Posterior vena cava (tissue), 2 donors: ENCODE measurements at regions of chr1 and their contacts with region 1.

Region 1: DNA sequence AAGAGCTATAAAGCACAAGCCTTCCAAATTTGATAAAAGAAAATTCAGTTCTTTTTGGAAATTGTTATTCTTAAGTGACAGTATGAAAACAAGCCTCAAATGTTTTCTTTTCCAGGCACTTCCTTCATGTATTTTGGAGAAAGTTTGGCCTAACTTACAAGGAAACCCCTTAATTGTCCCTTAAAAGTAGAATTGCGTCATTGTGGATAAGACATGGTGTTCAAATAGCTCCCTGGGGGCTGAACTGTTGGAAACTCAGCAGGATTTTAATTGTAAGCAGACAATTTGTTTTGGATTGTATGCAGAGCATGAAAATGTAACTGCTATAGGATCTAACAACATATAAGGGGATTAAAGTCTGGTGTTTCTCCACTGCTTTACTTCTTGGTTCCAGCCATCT is 35.4 kb upstream of the FGGY start:
- DNase-seq: no peak

Region 2: GRCh38 chr1:58592529-58593134 is 668.9 kb before region 1 on chr1:
- intact Hi-C with region 1: no loop called
- DNase-seq: peak; percentile 87

Region 3: DNA sequence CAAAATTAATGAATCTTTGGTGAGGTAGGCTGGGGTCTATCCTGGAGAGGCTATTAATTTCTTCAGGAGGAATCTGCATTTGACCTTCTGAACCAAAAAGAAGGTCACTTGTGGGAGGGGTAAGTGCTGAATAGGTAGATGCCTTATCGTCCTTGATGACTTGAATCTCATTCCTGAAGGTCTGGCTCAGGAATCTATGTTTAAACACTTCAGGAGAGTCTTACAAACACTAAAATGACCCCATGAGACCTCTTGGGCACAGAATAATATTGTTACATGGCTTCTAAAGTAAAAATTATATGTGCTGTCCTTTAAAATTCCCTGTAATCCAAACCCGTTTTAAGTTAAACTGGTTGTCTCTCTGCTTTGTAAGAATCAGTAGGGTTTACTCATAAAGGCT is 19.6 kb before region 1 on chr1:
- intact Hi-C with region 1: loop called in 1 of 2 experiments (anchors 1 kb)
- DNase-seq: no peak